Dendritic cell treated with granulocyte-macrophage colony-stimulating factor and Interleukin-4, amounts not matched to agents 40 ng/mL and 50 ng/mL, for 4 days (primary cell): ENCODE measurements at regions of chr6 and their contacts with region 1.

Region 1: DNA sequence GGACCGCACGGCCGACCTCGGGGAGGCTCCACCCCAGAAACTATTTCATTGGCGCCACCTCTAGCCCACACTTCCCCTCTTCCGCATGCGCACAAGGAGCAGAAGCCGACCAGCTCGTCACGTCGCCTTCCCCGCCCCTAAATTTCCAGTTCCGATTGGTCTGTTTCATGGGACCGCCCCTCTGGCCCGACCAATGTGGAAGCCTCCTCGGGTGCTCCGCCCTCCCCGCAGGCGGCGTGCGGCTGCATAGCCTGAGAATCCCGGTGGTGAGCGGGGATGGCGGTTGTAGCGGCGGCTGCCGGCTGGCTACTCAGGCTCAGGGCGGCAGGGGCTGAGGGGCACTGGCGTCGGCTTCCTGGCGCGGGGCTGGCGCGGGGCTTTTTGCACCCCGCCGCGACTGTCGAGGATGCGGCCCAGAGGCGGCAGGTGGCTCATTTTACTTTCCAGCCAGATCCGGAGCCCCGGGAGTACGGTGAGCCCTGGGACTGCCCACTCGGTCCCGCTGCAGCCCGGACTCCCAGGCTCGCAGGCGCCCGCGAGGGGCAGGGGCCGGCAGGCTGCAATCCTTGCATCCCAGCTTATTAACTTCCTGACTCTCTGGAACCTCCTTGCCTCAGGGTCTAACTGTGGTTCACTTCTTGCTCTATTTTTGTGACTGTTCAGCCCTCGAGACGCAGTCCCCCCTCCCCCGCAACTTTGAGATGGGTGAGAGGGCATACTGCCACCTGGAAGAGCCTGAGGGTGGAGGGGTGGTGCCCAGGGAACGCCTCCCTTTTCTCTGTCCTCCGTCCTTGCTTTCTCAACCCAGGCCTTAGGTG is at the start of gene BCKDHB:
- H3K4me3 Mint-ChIP-seq: peak within 1 kb of the TSS; percentile 90
- H3K27ac Mint-ChIP-seq: peak within 1 kb of the TSS; percentile 80
- H3K4me1 Mint-ChIP-seq: peaks cover 11% of the 10 kb centered on the region
- H3K27me3 Mint-ChIP-seq: peaks cover 12% of the 10 kb centered on the region

Region 2: GRCh38 chr6:79078075-79079025 is 1028.3 kb before region 1 on chr6 and contains the start of gene PHIP:
- intact Hi-C with region 1: loop called (anchors 10 kb)
- H3K4me3 Mint-ChIP-seq: peak within 1 kb of the TSS; percentile 92
- H3K27ac Mint-ChIP-seq: peak within 1 kb of the TSS; percentile 99
- H3K4me1 Mint-ChIP-seq: peaks cover 35% of the 10 kb centered on the region
- H3K27me3 Mint-ChIP-seq: no peaks in the 10 kb centered on the region

Region 3: DNA sequence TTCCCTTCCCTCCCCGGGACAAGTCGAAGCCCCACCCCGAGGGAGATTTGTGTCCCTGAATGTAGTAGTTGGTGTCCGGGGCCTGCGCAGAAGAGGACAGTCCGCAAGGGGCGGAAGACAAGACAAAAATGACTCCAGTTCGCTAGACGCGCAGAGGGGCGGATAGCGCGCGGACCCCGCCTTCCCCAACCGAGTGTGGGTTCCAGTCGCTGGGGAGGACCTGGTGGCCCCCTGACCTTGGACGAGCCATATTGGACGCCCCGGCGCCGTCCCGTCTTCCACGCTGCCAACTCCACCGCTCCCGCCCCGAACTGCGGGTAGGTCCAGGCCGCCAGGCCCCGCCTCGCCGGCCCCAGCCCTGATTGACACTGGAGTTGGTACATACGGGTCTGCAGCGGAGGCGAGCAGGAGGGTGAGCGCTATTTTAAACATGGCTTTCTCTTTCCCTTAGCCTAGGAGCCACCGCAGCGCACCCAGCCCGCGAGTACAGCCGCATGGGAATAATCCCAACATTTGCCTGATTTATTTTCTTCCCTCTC is 872.9 kb before region 1 on chr6:
- intact Hi-C with region 1: loop called (anchors 5 kb)
- H3K4me3 Mint-ChIP-seq: peak overlapping the region; percentile 95
- H3K27ac Mint-ChIP-seq: peak overlapping the region; percentile 94
- H3K4me1 Mint-ChIP-seq: peaks cover 6% of the 10 kb centered on the region
- H3K27me3 Mint-ChIP-seq: no peaks in the 10 kb centered on the region

Region 4: GRCh38 chr6:79570129-79571029 is 536.2 kb before region 1 on chr6:
- intact Hi-C with region 1: no loop called
- H3K4me3 Mint-ChIP-seq: peak overlapping the region; percentile 26
- H3K27ac Mint-ChIP-seq: no peak overlapping the region
- H3K4me1 Mint-ChIP-seq: no peaks in the 10 kb centered on the region
- H3K27me3 Mint-ChIP-seq: no peaks in the 10 kb centered on the region

Region 5: GRCh38 chr6:79737172-79737571 is 369.5 kb before region 1 on chr6:
- intact Hi-C with region 1: no loop called
- H3K4me3 Mint-ChIP-seq: no peak overlapping the region
- H3K27ac Mint-ChIP-seq: no peak overlapping the region
- H3K4me1 Mint-ChIP-seq: no peaks in the 10 kb centered on the region
- H3K27me3 Mint-ChIP-seq: peaks cover 2% of the 10 kb centered on the region

Region 6: DNA sequence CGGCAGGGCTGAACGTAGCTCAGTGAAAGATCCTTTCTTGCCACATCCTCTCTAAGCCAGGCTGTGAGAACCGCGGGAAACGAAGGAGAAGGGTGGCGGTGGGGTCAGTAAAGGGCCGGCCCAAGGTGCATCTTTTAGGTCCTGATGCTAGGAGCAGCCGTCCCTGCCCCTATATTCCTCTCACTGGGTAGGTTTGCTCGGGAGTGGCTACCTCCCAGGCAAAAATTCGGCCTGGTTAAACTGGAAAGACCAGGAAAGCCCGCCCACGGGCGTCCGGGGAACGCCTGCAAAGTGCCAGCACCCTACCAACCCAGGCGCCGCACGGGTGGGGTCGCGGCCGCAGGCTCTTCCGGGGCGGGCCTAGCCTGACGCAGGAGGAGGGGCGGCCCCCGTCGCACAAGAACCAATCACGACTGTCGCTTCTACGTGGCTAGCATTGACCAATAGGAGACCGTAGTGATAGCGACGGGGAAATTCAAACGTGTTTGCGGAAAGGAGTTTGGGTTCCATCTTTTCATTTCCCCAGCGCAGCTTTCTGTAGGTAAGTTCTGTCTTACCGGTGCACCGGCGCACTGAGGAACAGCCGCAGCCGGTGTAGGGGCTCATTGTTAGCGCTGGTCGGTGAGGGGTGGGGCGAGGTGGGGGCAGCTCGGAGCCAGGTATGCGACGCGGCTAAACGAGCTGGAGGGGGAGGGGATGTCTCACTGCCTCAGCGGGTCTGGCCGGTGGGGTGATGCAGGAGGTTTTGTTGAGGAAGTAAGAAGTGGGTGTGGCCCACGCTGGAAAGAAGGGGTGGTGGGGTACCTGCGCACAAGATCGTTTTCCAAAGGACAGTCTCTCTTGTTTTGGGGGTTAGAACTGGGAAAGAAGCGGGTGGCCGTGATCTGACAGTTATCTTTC is 102.2 kb before region 1 on chr6 and contains the start of gene TTK:
- intact Hi-C with region 1: loop called (anchors 2 kb)
- H3K4me3 Mint-ChIP-seq: peak within 1 kb of the TSS; percentile 89
- H3K27ac Mint-ChIP-seq: peak within 1 kb of the TSS; percentile 88
- H3K4me1 Mint-ChIP-seq: peaks cover 16% of the 10 kb centered on the region
- H3K27me3 Mint-ChIP-seq: no peaks in the 10 kb centered on the region

Region 7: DNA sequence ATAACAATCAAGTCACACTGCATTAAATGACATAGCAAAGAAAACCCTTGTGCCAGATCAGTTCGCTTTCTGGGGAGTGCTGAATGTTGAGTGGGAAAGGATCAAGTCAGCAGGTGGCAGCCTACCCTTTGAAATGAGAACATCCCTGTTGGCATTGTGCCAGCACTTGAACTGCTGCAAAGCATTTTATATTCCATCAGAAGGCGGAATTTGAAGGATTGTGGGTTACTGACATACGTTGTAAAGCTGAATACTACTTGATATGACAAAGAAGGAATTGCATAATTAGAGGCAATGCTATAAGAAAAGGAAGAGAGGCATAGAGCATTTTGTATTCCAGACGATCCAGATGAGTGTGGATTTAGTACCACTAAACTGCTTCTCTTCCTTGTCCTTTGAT is 26.4 kb after region 1 on chr6:
- intact Hi-C with region 1: no loop called
- H3K4me3 Mint-ChIP-seq: no peak overlapping the region
- H3K27ac Mint-ChIP-seq: no peak overlapping the region
- H3K4me1 Mint-ChIP-seq: peaks cover 10% of the 10 kb centered on the region
- H3K27me3 Mint-ChIP-seq: no peaks in the 10 kb centered on the region

Region 8: GRCh38 chr6:80163658-80164187 is 57.1 kb after region 1 on chr6:
- intact Hi-C with region 1: no loop called
- H3K4me3 Mint-ChIP-seq: no peak overlapping the region
- H3K27ac Mint-ChIP-seq: no peak overlapping the region
- H3K4me1 Mint-ChIP-seq: peaks cover 4% of the 10 kb centered on the region
- H3K27me3 Mint-ChIP-seq: no peaks in the 10 kb centered on the region